Prostate gland (tissue), 2 donors: ENCODE measurements at regions of chr20 and their contacts with region 1.

Region 1: DNA sequence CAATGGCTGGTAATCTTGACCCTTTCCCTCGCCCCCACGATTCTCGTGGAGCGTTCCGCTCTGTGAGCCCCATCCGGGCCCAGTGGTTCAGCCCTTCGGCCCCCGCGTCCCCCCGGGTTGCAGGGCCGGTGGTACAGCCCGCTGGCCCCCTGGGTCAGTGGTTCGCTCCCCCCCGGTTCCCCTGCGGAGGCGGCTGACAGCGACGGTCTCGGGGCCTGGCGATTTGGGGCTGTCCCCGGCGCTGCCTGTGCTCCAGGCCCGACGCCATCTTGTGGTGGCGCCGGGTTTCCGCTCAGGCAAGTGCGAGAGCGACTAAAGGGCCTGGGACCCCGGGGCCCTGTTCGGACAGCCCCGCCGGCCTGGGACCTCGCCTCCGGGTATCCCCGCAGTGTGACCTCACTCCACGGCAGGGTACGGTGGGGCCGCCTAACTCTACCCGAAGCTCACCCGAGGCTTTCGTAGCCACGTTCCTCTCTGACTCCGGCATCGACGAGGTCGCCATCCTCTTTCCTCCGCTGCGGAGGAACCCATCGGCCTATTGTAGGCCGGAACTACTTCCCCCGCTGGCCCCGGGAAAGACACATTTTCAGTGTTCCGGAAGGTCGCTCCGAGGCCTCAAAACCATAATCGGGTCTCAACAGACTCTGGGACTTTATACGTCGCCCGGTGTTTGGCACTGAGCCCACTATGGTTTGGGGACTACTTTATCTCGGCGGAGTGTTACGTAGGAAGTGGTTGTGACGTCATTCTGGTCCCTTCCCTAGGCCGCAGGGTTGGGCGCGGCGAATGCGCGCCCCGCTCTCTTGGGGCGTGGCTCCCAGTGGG is at the start of gene ZNF335:
- DNase-seq: peak; percentile 92
- H3K4me3 ChIP-seq: peak within 1 kb of the TSS; percentile 65 to 73
- H3K27ac ChIP-seq: peak within 1 kb of the TSS; percentile 100
- H3K4me1 ChIP-seq: no peaks in the 10 kb centered on the region
- H3K27me3 ChIP-seq: no peaks in the 10 kb centered on the region
- CTCF ChIP-seq: peak; percentile 44 to 77 (median 65)
- POLR2A ChIP-seq: peak; percentile 71
- total RNA-seq, gene ZNF335: 21.4 to 43.4 TPM

Region 2: DNA sequence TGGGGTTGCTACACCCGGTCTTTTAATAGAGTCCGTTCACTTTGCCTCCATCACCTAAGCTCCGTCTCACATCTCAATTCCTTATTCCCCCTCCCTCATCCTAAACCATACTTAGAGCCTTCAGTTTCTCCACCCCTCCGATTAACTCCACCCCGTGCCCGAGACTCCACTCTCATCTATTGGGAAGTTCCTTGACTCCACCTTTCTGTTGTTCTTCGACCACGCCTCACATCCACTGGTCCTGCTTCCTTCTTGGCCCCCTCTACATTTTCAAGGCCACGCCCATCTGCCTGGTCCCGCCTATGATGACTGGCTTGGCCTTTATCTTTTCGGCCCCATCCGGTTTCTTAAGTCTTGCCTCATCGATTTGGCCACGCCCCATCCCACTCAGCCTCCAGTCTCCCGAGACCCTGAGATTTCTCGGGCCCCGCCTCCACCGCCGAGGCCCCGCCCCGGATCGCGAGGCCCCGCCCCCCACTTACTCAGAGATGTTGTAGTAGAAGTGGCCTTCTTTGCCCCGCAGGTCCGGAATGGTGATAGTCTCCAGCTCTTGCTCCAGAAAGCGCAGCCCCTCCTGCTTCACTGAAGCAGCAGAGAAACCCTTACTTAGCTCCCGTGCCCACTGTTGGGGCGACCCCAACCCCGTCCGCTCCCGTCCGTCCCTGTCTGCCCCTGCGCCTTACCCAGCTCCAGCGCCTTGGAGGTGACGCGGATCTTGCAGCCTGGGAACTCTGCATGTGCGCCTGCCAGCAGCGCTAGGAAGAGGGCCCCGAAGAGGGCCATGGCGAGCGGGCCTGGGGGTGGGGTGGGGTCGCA is 61.0 kb before region 1 on chr20:
- intact Hi-C with region 1: loop called (anchors 2 kb)
- DNase-seq: peak; percentile 92
- H3K4me3 ChIP-seq: peak overlapping the region; percentile 29 to 32
- H3K27ac ChIP-seq: peak overlapping the region; percentile 60 to 65
- H3K4me1 ChIP-seq: no peaks in the 10 kb centered on the region
- H3K27me3 ChIP-seq: no peaks in the 10 kb centered on the region
- CTCF ChIP-seq: no peak
- POLR2A ChIP-seq: peak; percentile 68

Region 3: DNA sequence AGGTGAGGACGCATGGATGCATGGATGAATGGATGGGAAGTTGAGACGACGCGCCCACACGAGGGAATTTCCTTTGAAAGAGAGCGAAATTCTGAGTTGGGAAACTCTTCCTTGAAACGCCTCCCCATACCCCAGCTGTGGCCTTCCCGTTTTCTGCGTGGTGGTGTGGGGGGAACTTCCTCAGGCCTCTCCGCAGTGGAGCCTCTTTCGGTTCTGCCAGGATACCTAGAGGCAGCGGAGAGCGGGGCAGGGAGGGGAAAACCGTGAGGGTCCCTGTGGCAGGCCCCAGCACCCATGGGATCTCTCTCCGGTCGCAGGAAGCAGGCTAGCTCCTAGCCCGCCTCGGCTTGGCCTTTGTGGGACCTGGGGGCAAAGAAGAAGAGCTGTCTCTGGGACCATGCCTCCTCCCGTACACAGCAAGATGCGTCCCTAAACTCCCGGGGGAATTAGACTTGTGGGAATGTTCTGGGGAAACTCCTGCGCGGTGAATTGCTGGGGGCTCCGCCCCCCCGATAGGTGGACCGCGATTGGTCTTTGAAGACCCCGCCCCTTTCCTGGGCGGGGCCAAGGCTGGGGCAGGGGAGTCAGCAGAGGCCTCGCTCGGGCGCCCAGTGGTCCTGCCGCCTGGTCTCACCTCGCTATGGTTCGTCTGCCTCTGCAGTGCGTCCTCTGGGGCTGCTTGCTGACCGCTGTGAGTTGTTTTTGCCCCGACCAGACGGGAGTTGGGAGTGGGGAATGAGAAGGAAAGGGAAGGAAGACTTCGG is 146.0 kb after region 1 on chr20 and contains the start of gene CD40:
- intact Hi-C with region 1: no loop called
- DNase-seq: peak; percentile 77
- H3K4me3 ChIP-seq: peak within 1 kb of the TSS; percentile 28 to 37
- H3K27ac ChIP-seq: peak within 1 kb of the TSS; percentile 74
- H3K4me1 ChIP-seq: no peaks in the 10 kb centered on the region
- H3K27me3 ChIP-seq: no peaks in the 10 kb centered on the region
- CTCF ChIP-seq: no peak
- POLR2A ChIP-seq: peak; percentile 79
- total RNA-seq, gene CD40: 16.9 to 27.1 TPM

Region 4: GRCh38 chr20:46330072-46330763 is 358.3 kb after region 1 on chr20:
- intact Hi-C with region 1: no loop called
- DNase-seq: peak; percentile 25
- H3K4me3 ChIP-seq: no peak overlapping the region
- H3K27ac ChIP-seq: peak overlapping the region in 1 of 2 donors; percentile 8
- H3K4me1 ChIP-seq: no peaks in the 10 kb centered on the region
- H3K27me3 ChIP-seq: no peaks in the 10 kb centered on the region
- CTCF ChIP-seq: no peak
- POLR2A ChIP-seq: no peak

Region 5: GRCh38 chr20:46375771-46376170 is 403.9 kb after region 1 on chr20:
- intact Hi-C with region 1: no loop called
- DNase-seq: no peak
- H3K4me3 ChIP-seq: no peak overlapping the region
- H3K27ac ChIP-seq: no peak overlapping the region
- H3K4me1 ChIP-seq: peaks cover 9% of the 10 kb centered on the region
- H3K27me3 ChIP-seq: no peaks in the 10 kb centered on the region
- CTCF ChIP-seq: no peak
- POLR2A ChIP-seq: no peak